ENCODE measurements at regions of chr1 and their contacts with region 1.

Region 1: DNA sequence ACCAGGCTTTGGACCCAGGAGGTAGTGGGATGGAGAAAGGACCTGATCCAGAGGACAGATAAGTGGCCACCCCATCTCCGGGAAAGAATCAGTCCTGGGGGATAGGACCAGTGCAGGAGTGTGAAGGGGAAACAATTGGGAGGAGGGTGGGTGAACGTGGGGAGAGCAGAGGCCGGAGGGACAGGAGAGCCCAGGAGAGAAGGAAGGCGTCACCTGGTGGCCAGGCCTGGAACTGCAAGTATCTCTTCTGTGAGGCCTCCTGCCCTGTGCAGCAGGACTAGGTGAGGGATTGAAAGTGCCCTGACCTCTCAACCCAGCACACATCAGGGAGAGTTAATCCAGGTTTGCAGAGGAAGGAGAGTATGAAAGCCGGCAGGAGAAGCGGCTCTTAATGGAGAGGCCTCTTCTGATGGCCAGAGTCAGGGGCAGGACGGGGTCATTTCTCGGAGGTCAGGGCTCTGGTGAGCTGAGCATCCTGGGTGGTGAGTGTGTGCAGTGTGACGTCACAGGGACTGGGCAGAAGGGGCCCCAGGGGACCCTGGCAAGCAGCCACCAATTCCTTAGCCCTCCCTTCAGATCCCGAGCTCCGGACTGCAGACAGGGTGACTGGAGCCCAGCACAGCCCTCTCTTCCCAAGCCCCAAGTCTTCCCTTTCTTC is 9.2 kb upstream of the LAD1 start:
- DNase-seq: peak; percentile 51
- ATAC-seq: peak; percentile 45
- H3K4me3 Mint-ChIP-seq: no peak overlapping the region
- H3K27ac Mint-ChIP-seq: no peak overlapping the region
- H3K4me1 Mint-ChIP-seq: no peaks in the 10 kb centered on the region
- H3K27me3 Mint-ChIP-seq: peaks cover 6% of the 10 kb centered on the region
- CTCF ChIP-seq: no peak

Region 2: DNA sequence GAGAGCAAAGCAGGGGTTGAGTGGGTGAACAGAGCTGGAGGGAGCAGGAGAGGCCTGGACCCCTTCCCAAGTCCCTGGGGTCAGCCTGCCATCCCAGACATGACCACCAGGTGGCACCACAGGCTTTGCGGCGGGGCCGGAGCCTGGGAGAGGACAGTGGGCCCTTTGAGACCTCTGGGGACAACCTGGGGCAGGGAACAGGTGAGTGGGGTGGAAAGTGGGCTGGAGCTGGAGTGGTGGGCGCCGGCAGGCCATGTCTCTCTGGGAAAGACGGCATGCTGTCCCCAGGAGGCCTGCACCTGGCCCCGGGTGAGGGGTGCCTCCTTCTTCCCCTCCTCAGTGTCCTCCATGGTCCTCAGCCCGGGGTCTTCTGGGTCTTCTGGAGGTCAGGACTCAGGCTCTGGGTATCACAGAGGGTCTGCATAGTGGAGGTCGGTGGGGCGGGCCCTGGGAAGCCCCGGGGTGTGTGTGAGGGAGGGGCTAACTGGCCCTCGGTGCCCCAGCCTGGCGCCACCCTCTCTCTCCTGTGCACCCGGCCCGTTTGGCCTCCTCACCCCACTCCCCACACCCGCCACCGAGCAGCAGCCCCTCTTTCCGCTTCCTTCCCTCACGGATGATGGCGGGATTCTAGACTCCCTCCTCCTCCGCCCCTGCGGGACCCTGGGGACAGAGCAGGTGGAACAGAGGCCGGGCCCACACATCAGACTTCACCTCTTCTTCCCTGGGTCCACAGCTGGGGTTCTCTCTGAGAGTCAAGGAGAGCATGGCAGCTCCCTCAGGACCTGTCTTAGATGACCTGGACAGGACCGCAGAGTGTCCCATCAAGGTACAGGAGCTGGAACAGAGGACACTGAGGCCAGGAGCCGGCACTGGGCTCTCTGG is 153.4 kb before region 1 on chr1:
- CTCF ChIA-PET with region 1: no interaction called
- POLR2A ChIA-PET with region 1: no interaction called
- intact Hi-C with region 1: loop called (anchors 1 kb)
- DNase-seq: peak; percentile 53
- ATAC-seq: peak; percentile 52
- H3K4me3 Mint-ChIP-seq: no peak overlapping the region
- H3K27ac Mint-ChIP-seq: no peak overlapping the region
- H3K4me1 Mint-ChIP-seq: no peaks in the 10 kb centered on the region
- H3K27me3 Mint-ChIP-seq: peaks cover 8% of the 10 kb centered on the region
- CTCF ChIP-seq: peak; percentile 23

Region 3: GRCh38 chr1:201268604-201269151 is 139.6 kb before region 1 on chr1:
- CTCF ChIA-PET with region 1: no interaction called
- POLR2A ChIA-PET with region 1: no interaction called
- intact Hi-C with region 1: no loop called
- DNase-seq: no peak
- ATAC-seq: no peak
- H3K4me3 Mint-ChIP-seq: no peak overlapping the region
- H3K27ac Mint-ChIP-seq: no peak overlapping the region
- H3K4me1 Mint-ChIP-seq: no peaks in the 10 kb centered on the region
- H3K27me3 Mint-ChIP-seq: peaks cover 31% of the 10 kb centered on the region
- CTCF ChIP-seq: no peak

Measured in activated B cell treated with CpG ODN at 0.5 μM for 24 hours (primary cell).